ENCODE measurements at regions of chr5 and their contacts with region 1.

Region 1: GRCh38 chr5:80654391-80655230 is at the starts of genes DHFR and MSH3:
- DNase-seq: peak; percentile 73 to 91 (median 87)
- ATAC-seq: peak; percentile 86
- H3K4me3 ChIP-seq: peak within 1 kb of the TSS; percentile 91
- H3K4me3 Mint-ChIP-seq: peak within 1 kb of the TSS; percentile 82 to 98 (median 90)
- H3K27ac ChIP-seq: peak within 1 kb of the TSS; percentile 82
- H3K27ac Mint-ChIP-seq: peak within 1 kb of the TSS; percentile 89 to 97 (median 96)
- H3K4me1 ChIP-seq: peaks cover 24 to 28% of the 10 kb centered on the region in 2 donors
- H3K4me1 Mint-ChIP-seq: peaks cover 10 to 40% (median 32%) of the 10 kb centered on the region in 7 donors
- H3K27me3 ChIP-seq: no peaks in the 10 kb centered on the region
- H3K27me3 Mint-ChIP-seq: no peaks in the 10 kb centered on the region
- total RNA-seq, gene DHFR: 6.9 to 68.9 (median 17.0) TPM
- total RNA-seq, gene MSH3: 12.0 to 20.9 (median 16.7) TPM

Region 2: GRCh38 chr5:79612667-79613198 is 1041.9 kb before region 1 on chr5:
- CTCF ChIA-PET with region 1: no interaction called
- POLR2A ChIA-PET with region 1: no interaction called
- intact Hi-C with region 1: loop called (anchors 1 kb)
- DNase-seq: no peak
- ATAC-seq: no peak
- H3K4me3 ChIP-seq: peak overlapping the region; percentile 84
- H3K4me3 Mint-ChIP-seq: peak overlapping the region; percentile 95 to 100 (median 97)
- H3K27ac ChIP-seq: peak overlapping the region; percentile 90
- H3K27ac Mint-ChIP-seq: peak overlapping the region; percentile 91 to 99 (median 98)
- H3K4me1 ChIP-seq: peaks cover 14 to 18% of the 10 kb centered on the region in 2 donors
- H3K4me1 Mint-ChIP-seq: peaks cover 25 to 58% (median 44%) of the 10 kb centered on the region in 7 donors
- H3K27me3 ChIP-seq: no peaks in the 10 kb centered on the region
- H3K27me3 Mint-ChIP-seq: peaks cover 0 to 6% (median 2%) of the 10 kb centered on the region in 5 donors

Region 3: DNA sequence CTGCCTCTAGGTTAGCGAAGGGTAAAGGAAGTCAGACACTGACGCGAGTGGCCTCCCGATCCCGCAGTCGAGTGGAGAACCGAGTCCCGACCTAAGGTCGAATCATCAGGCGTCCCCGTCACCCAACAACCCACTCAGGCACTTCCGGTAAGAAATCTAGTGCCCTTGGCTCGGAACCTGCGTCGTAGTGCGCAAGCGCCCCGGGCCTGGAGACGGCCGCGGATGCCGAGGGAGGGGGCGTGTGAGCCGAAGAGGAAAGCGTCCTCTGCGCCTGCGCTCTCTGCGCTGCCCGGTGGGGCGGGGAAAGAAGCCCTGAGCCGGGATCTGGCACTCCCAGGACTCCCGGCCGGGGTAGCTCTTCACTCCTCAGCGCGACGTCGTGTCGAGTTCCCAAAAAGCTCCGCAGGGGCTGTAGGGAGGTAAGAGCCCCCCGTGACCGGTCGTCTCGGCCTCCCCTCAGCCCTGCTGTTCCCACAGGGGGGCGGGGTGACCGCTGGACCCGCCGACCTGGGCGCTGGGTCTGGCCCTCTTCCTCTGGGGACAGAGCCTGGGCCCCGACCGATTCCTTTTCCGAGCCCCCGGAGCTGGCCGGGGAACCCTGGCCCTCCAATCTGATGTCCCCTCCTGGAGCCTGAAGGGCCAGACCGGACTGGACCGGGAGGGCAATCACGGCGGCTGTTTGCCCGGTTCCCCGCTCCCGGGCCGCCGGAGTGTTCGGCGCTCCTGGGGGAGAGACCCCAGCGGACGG is 246.7 kb before region 1 on chr5 and contains the start of gene ZFYVE16:
- CTCF ChIA-PET with region 1: no interaction called
- POLR2A ChIA-PET with region 1: no interaction called
- intact Hi-C with region 1: loop called (anchors 1 kb)
- DNase-seq: peak; percentile 93 to 98 (median 94)
- ATAC-seq: peak; percentile 93
- H3K4me3 ChIP-seq: peak within 1 kb of the TSS; percentile 94
- H3K4me3 Mint-ChIP-seq: peak within 1 kb of the TSS; percentile 91 to 99 (median 96)
- H3K27ac ChIP-seq: peak within 1 kb of the TSS; percentile 85
- H3K27ac Mint-ChIP-seq: peak within 1 kb of the TSS; percentile 97 to 100 (median 99)
- H3K4me1 ChIP-seq: peaks cover 0 to 3% of the 10 kb centered on the region in 2 donors
- H3K4me1 Mint-ChIP-seq: peaks cover 20 to 32% (median 21%) of the 10 kb centered on the region in 7 donors
- H3K27me3 ChIP-seq: no peaks in the 10 kb centered on the region
- H3K27me3 Mint-ChIP-seq: peaks cover 0 to 7% (median 0%) of the 10 kb centered on the region in 5 donors
- total RNA-seq, gene ZFYVE16: 12.0 to 32.0 (median 26.0) TPM

Region 4: GRCh38 chr5:80487829-80488721 is 166.5 kb before region 1 on chr5 and contains the start of gene FAM151B:
- CTCF ChIA-PET with region 1: no interaction called
- POLR2A ChIA-PET with region 1: interaction called, 3 read pairs
- intact Hi-C with region 1: loop called (anchors 1 to 5 kb)
- DNase-seq: peak; percentile 58 to 86 (median 79)
- ATAC-seq: peak; percentile 90
- H3K4me3 ChIP-seq: peak within 1 kb of the TSS; percentile 71
- H3K4me3 Mint-ChIP-seq: peak within 1 kb of the TSS; percentile 83 to 92 (median 88)
- H3K27ac ChIP-seq: peak within 1 kb of the TSS; percentile 52
- H3K27ac Mint-ChIP-seq: peak within 1 kb of the TSS; percentile 47 to 88 (median 72)
- H3K4me1 ChIP-seq: peaks cover 0 to 7% of the 10 kb centered on the region in 2 donors
- H3K4me1 Mint-ChIP-seq: peaks cover 9 to 27% (median 14%) of the 10 kb centered on the region in 7 donors
- H3K27me3 ChIP-seq: no peaks in the 10 kb centered on the region
- H3K27me3 Mint-ChIP-seq: peaks cover 0 to 36% (median 7%) of the 10 kb centered on the region in 5 donors
- total RNA-seq, gene FAM151B: 0.36 to 3.4 (median 1.1) TPM in 4 of 5 experiments, not detected in the other

Region 5: DNA sequence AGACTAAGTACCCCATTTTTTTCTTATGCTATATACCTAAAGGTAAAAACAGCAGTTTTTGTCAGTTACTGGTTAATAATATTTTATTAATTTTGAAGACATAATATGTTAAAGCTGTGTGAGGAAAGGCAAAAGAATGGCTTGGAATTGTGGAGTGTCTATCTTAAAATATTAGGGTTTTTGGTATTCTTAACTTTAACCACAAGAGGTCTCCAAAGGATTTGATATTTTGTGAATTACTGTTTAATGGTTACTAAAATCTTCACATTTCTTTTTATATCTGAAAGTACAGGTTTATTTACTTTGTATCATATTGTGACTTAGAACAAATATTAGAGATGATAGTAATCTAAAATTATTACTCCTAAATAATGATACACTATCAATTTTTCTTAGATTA is 32.1 kb after region 1 on chr5:
- CTCF ChIA-PET with region 1: no interaction called
- POLR2A ChIA-PET with region 1: no interaction called
- intact Hi-C with region 1: no loop called
- DNase-seq: peak in 5 of 9 donors; percentile 11 to 42 (median 19)
- ATAC-seq: no peak
- H3K4me3 ChIP-seq: no peak overlapping the region
- H3K4me3 Mint-ChIP-seq: no peak overlapping the region
- H3K27ac ChIP-seq: no peak overlapping the region
- H3K27ac Mint-ChIP-seq: no peak overlapping the region
- H3K4me1 ChIP-seq: no peaks in the 10 kb centered on the region
- H3K4me1 Mint-ChIP-seq: peaks cover 7 to 35% (median 14%) of the 10 kb centered on the region in 7 donors
- H3K27me3 ChIP-seq: no peaks in the 10 kb centered on the region
- H3K27me3 Mint-ChIP-seq: no peaks in the 10 kb centered on the region

Region 6: GRCh38 chr5:80754900-80755299 is 100.3 kb after region 1 on chr5:
- CTCF ChIA-PET with region 1: no interaction called
- POLR2A ChIA-PET with region 1: no interaction called
- intact Hi-C with region 1: loop called in 1 of 2 experiments (anchors 1 kb)
- DNase-seq: peak in 2 of 9 donors; percentile 11 to 49
- ATAC-seq: no peak
- H3K4me3 ChIP-seq: peak overlapping the region; percentile 7
- H3K4me3 Mint-ChIP-seq: peak overlapping the region; percentile 49 to 87 (median 78)
- H3K27ac ChIP-seq: peak overlapping the region; percentile 57
- H3K27ac Mint-ChIP-seq: peak overlapping the region; percentile 45 to 93 (median 79)
- H3K4me1 ChIP-seq: peaks cover 20 to 28% of the 10 kb centered on the region in 2 donors
- H3K4me1 Mint-ChIP-seq: peaks cover 30 to 61% (median 47%) of the 10 kb centered on the region in 7 donors
- H3K27me3 ChIP-seq: no peaks in the 10 kb centered on the region
- H3K27me3 Mint-ChIP-seq: no peaks in the 10 kb centered on the region

Region 7: DNA sequence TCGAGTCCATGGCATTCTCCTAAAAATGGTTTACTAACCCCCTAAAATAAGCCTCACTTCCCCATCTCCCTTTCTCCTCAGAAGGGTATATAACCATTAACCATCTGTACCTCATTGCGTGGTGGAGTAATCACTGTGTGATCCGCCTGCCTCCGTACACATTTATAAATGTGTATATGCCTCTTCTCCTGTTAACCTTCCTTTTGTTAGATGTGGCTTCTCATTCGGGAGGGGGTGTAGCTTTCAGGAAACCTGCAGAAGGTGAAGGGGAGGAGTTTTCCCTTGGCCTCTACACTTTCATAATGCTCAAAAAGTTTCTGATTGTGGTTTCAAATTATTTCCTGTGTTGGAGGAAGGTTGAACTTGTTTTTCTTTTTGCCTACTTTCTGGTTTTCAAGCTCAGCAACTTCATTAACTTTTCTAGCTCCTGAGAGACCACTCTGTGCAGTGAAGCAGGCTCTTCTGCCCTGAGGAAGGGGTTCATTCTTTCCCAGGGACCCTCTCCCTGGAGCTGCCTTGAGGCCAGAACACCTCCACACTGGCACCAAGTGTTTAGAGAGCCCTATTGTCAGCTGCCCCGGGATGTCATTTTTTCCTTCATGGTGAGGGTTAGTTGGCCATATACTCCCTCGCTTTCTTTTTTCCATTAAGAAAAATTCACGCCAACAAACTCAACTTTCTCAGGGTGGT is 352.5 kb after region 1 on chr5:
- CTCF ChIA-PET with region 1: no interaction called
- POLR2A ChIA-PET with region 1: no interaction called
- intact Hi-C with region 1: loop called in 1 of 2 experiments (anchors 2 kb)
- DNase-seq: peak in 8 of 9 donors; percentile 48 to 91 (median 88)
- ATAC-seq: peak; percentile 95
- H3K4me3 ChIP-seq: peak overlapping the region; percentile 53
- H3K4me3 Mint-ChIP-seq: peak overlapping the region; percentile 75 to 95 (median 89)
- H3K27ac ChIP-seq: peak overlapping the region; percentile 80
- H3K27ac Mint-ChIP-seq: peak overlapping the region; percentile 92 to 100 (median 95)
- H3K4me1 ChIP-seq: peaks cover 35 to 64% of the 10 kb centered on the region in 2 donors
- H3K4me1 Mint-ChIP-seq: peaks cover 45 to 93% (median 80%) of the 10 kb centered on the region in 7 donors
- H3K27me3 ChIP-seq: no peaks in the 10 kb centered on the region
- H3K27me3 Mint-ChIP-seq: no peaks in the 10 kb centered on the region

Region 8: DNA sequence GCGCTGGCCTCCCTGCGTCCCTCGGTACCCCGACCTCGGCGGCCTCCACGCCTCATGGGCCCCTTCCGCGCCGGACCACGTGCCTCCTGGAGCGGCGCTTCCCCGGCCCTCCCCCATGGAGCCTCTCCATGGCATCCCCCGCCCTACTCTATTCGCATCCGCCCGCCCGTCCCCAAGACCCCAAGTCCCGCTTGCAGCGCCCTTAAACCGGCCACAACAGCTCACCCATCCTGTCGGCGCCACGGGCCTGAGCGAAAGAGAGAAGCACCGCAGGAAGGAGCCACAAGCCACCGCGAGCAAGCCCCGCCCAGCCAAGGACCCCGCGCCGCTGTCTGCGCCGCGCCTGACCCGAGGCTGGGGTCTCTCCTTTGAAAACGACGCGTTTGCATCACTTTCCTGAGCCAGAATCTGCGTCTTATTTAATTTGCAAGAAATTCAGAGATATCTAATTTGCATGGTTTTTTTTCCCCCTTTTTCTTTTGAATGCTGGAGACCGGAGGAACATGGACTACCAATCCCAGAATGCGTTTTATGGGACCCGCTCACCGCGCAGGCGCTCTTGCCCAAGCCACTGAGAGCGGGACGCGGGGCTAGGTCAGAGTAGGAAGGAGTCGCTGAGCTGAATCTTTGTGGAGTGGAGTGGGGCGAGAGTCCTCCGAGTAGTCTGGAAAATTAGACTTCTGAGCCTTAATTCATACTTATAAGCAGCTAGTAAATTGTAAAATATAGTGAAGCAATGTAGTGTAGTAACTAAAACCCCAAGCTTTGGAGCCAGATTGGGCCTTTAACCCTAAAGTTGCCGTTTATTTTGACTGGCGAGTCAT is 1623.7 kb after region 1 on chr5 and contains the start of gene RPS23:
- CTCF ChIA-PET with region 1: no interaction called
- POLR2A ChIA-PET with region 1: no interaction called
- intact Hi-C with region 1: loop called in 1 of 2 experiments (anchors 2 kb)
- DNase-seq: peak; percentile 78 to 90 (median 85)
- ATAC-seq: peak; percentile 96
- H3K4me3 ChIP-seq: peak within 1 kb of the TSS; percentile 72
- H3K4me3 Mint-ChIP-seq: peak within 1 kb of the TSS; percentile 87 to 98 (median 94)
- H3K27ac ChIP-seq: peak within 1 kb of the TSS; percentile 80
- H3K27ac Mint-ChIP-seq: peak within 1 kb of the TSS; percentile 94 to 99 (median 96)
- H3K4me1 ChIP-seq: peaks cover 12 to 16% of the 10 kb centered on the region in 2 donors
- H3K4me1 Mint-ChIP-seq: peaks cover 13 to 65% (median 39%) of the 10 kb centered on the region in 7 donors
- H3K27me3 ChIP-seq: no peaks in the 10 kb centered on the region
- H3K27me3 Mint-ChIP-seq: no peaks in the 10 kb centered on the region
- total RNA-seq, gene RPS23: 2,233 to 4,335 (median 3,874) TPM